ENCODE measurements at regions of chr1 and their contacts with region 1.

Region 1: DNA sequence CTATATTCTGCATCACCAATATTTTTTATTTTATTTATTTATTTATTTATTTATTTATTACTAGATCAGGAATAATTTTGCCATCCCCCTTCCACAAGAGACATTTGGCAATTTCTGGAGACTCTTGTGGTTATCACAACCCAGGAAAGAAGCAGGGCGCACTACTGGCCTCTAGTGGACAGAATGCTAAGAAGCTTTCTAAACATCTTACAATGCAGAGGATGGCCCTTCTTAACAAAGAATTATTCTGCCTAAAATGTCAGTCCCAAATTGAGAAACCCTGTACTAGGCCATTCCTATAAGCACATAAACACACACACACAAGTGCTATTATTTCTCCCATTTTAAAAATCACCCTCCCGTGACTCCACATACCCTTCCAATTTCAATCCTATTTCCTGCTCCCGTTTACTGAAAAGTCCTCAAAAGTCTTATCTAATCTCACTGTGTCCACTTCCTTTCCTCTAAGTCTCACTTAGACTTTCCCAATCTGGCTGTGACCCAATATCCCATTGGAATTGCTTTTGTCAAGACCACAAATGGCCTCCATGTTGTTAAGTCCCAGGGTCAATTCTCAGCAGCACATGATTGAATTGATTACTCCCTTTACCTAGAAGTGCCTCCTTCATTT is 43.7 kb upstream of the RNF11 start:
- DNase-seq: peak; percentile 79
- H3K4me3 Mint-ChIP-seq: no peak overlapping the region
- H3K27ac Mint-ChIP-seq: no peak overlapping the region
- H3K4me1 Mint-ChIP-seq: no peaks in the 10 kb centered on the region
- H3K27me3 Mint-ChIP-seq: no peaks in the 10 kb centered on the region
- CTCF ChIP-seq: peak; percentile 68

Region 2: DNA sequence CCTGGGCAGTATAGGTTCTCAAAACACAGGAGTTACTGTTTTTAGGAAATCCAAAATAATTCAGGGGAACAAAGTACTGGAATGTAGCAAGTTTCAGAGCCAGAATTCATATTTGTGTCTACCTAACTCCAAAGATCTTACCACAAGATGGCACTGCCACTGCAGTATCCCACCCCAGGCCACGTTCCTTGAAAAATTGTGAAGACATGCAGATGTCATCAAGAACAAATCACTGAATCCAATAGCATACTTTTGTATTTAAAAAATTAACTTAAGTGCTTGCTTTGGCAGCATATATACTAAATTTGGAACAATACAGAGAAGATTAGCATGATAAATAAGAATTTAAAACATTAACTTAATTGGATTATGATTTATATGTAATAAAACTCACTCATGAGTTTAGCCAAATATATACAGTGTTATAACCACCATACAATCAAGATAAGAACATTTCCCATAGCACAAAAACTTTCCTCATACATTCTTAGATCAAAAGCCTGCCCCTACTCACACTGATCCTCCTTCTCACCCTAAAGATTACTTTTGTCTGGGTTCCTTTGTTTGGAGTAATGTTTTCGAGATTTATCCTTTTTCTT is 442.2 kb before region 1 on chr1:
- CTCF ChIA-PET with region 1: interaction called, 9 read pairs
- POLR2A ChIA-PET with region 1: no interaction called
- intact Hi-C with region 1: loop called (anchors 5 kb)
- DNase-seq: peak; percentile 47
- H3K4me3 Mint-ChIP-seq: no peak overlapping the region
- H3K27ac Mint-ChIP-seq: no peak overlapping the region
- H3K4me1 Mint-ChIP-seq: no peaks in the 10 kb centered on the region
- H3K27me3 Mint-ChIP-seq: no peaks in the 10 kb centered on the region
- CTCF ChIP-seq: peak; percentile 40

Region 3: GRCh38 chr1:50929376-50929958 is 262.9 kb before region 1 on chr1:
- CTCF ChIA-PET with region 1: interaction called, 70 read pairs
- POLR2A ChIA-PET with region 1: no interaction called
- intact Hi-C with region 1: loop called (anchors 1 kb)
- DNase-seq: peak; percentile 37
- H3K4me3 Mint-ChIP-seq: no peak overlapping the region
- H3K27ac Mint-ChIP-seq: no peak overlapping the region
- H3K4me1 Mint-ChIP-seq: no peaks in the 10 kb centered on the region
- H3K27me3 Mint-ChIP-seq: no peaks in the 10 kb centered on the region
- CTCF ChIP-seq: peak; percentile 40

Region 4: GRCh38 chr1:50978144-50978851 is 214.0 kb before region 1 on chr1:
- CTCF ChIA-PET with region 1: interaction called, 10 read pairs
- POLR2A ChIA-PET with region 1: interaction called, 5 read pairs
- intact Hi-C with region 1: no loop called
- DNase-seq: peak; percentile 73
- H3K4me3 Mint-ChIP-seq: peak overlapping the region; percentile 75
- H3K27ac Mint-ChIP-seq: peak overlapping the region; percentile 71
- H3K4me1 Mint-ChIP-seq: peaks cover 12% of the 10 kb centered on the region
- H3K27me3 Mint-ChIP-seq: no peaks in the 10 kb centered on the region
- CTCF ChIP-seq: no peak

Region 5: DNA sequence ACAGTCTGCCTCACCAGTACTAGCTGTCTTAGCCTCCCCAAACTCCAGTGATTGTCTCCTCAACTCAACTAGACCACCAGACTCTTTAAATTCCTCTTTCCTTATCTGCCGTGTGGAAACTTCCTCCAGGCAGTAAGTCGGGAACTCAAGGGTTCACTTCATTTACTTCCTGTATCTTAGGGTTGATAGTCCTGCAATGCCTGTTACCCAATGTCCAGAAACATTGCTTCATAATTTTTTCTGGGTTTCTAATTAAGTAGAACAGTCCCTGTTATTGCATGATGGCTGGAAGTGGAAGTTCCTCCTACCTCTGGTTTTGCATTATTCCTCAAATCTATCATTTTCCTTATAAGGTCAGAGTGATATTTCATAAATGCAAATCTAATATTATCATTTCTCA is 17.1 kb before region 1 on chr1:
- CTCF ChIA-PET with region 1: interaction called, 76 read pairs
- POLR2A ChIA-PET with region 1: no interaction called
- intact Hi-C with region 1: no loop called
- DNase-seq: peak; percentile 42
- H3K4me3 Mint-ChIP-seq: no peak overlapping the region
- H3K27ac Mint-ChIP-seq: peak overlapping the region; percentile 21
- H3K4me1 Mint-ChIP-seq: peaks cover 10% of the 10 kb centered on the region
- H3K27me3 Mint-ChIP-seq: no peaks in the 10 kb centered on the region
- CTCF ChIP-seq: no peak

Region 6: GRCh38 chr1:51235673-51236530 is 43.6 kb after region 1 on chr1 and contains the start of gene RNF11:
- CTCF ChIA-PET with region 1: interaction called, 20 read pairs
- POLR2A ChIA-PET with region 1: interaction called, 9 read pairs
- intact Hi-C with region 1: no loop called
- DNase-seq: peak; percentile 85
- H3K4me3 Mint-ChIP-seq: peak within 1 kb of the TSS; percentile 80
- H3K27ac Mint-ChIP-seq: peak within 1 kb of the TSS; percentile 70
- H3K4me1 Mint-ChIP-seq: peaks cover 35% of the 10 kb centered on the region
- H3K27me3 Mint-ChIP-seq: no peaks in the 10 kb centered on the region
- CTCF ChIP-seq: no peak
- total RNA-seq, gene RNF11: 73.1 and 86.0 TPM in 2 replicates

Region 7: DNA sequence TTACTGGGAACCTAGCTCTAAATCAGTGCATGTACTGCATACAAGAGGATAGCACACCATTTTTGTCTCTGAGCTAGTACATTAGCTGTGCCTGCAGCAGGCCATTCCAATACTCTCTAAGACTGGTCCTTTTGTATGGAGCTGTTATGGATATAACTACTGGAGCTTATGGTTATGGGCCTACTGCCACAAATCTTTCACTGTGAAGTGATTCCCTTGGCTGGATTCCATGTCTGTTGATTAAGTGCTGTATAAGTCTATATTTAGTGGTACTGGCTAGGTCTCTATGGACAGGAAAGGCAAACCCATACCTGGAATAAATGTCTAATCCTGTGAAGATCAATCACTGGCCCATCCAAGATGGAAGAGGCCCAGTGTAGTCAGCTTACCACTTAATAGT is 961.6 kb after region 1 on chr1:
- CTCF ChIA-PET with region 1: no interaction called
- POLR2A ChIA-PET with region 1: no interaction called
- intact Hi-C with region 1: no loop called
- DNase-seq: no peak
- H3K4me3 Mint-ChIP-seq: no peak overlapping the region
- H3K27ac Mint-ChIP-seq: no peak overlapping the region
- H3K4me1 Mint-ChIP-seq: peaks cover 19% of the 10 kb centered on the region
- H3K27me3 Mint-ChIP-seq: no peaks in the 10 kb centered on the region
- CTCF ChIP-seq: no peak